ENCODE measurements at regions of chr3 and their contacts with region 1.

Region 1: GRCh38 chr3:33074217-33075067 is 22.5 kb downstream of the GLB1 start:
- DNase-seq: peak; percentile 84
- H3K4me3 Mint-ChIP-seq: no peak overlapping the region
- H3K27ac Mint-ChIP-seq: no peak overlapping the region
- H3K4me1 Mint-ChIP-seq: peaks cover 11% of the 10 kb centered on the region
- H3K27me3 Mint-ChIP-seq: no peaks in the 10 kb centered on the region

Region 2: GRCh38 chr3:32401556-32402081 is 672.8 kb before region 1 on chr3:
- CTCF ChIA-PET with region 1: no interaction called
- intact Hi-C with region 1: no loop called
- DNase-seq: peak; percentile 77
- H3K4me3 Mint-ChIP-seq: peak overlapping the region; percentile 92
- H3K27ac Mint-ChIP-seq: peak overlapping the region; percentile 99
- H3K4me1 Mint-ChIP-seq: peaks cover 74% of the 10 kb centered on the region
- H3K27me3 Mint-ChIP-seq: no peaks in the 10 kb centered on the region

Region 3: GRCh38 chr3:32733631-32734229 is 340.7 kb before region 1 on chr3:
- CTCF ChIA-PET with region 1: interaction called, 3 read pairs
- intact Hi-C with region 1: loop called (anchors 10 kb)
- DNase-seq: no peak
- H3K4me3 Mint-ChIP-seq: no peak overlapping the region
- H3K27ac Mint-ChIP-seq: no peak overlapping the region
- H3K4me1 Mint-ChIP-seq: no peaks in the 10 kb centered on the region
- H3K27me3 Mint-ChIP-seq: no peaks in the 10 kb centered on the region

Region 4: GRCh38 chr3:32897981-32898622 is 176.3 kb before region 1 on chr3:
- CTCF ChIA-PET with region 1: no interaction called
- intact Hi-C with region 1: no loop called
- DNase-seq: no peak
- H3K4me3 Mint-ChIP-seq: no peak overlapping the region
- H3K27ac Mint-ChIP-seq: no peak overlapping the region
- H3K4me1 Mint-ChIP-seq: peaks cover 2% of the 10 kb centered on the region
- H3K27me3 Mint-ChIP-seq: peaks cover 18% of the 10 kb centered on the region

Region 5: GRCh38 chr3:32973982-32974381 is 100.5 kb before region 1 on chr3:
- CTCF ChIA-PET with region 1: interaction called, 11 read pairs
- intact Hi-C with region 1: no loop called
- DNase-seq: peak; percentile 49
- H3K4me3 Mint-ChIP-seq: no peak overlapping the region
- H3K27ac Mint-ChIP-seq: no peak overlapping the region
- H3K4me1 Mint-ChIP-seq: peaks cover 10% of the 10 kb centered on the region
- H3K27me3 Mint-ChIP-seq: no peaks in the 10 kb centered on the region

Region 6: GRCh38 chr3:33030802-33031201 is 43.6 kb before region 1 on chr3:
- CTCF ChIA-PET with region 1: interaction called, 10 read pairs
- intact Hi-C with region 1: loop called (anchors 2 kb)
- DNase-seq: peak; percentile 56
- H3K4me3 Mint-ChIP-seq: no peak overlapping the region
- H3K27ac Mint-ChIP-seq: no peak overlapping the region
- H3K4me1 Mint-ChIP-seq: peaks cover 15% of the 10 kb centered on the region
- H3K27me3 Mint-ChIP-seq: no peaks in the 10 kb centered on the region

Region 7: GRCh38 chr3:33089515-33089914 is 15.1 kb after region 1 on chr3:
- CTCF ChIA-PET with region 1: interaction called, 21 read pairs
- intact Hi-C with region 1: no loop called
- DNase-seq: peak; percentile 28
- H3K4me3 Mint-ChIP-seq: no peak overlapping the region
- H3K27ac Mint-ChIP-seq: no peak overlapping the region
- H3K4me1 Mint-ChIP-seq: peaks cover 68% of the 10 kb centered on the region
- H3K27me3 Mint-ChIP-seq: no peaks in the 10 kb centered on the region

Region 8: GRCh38 chr3:33131331-33132018 is 57.0 kb after region 1 on chr3:
- CTCF ChIA-PET with region 1: interaction called, 10 read pairs
- intact Hi-C with region 1: no loop called
- DNase-seq: peak; percentile 50
- H3K4me3 Mint-ChIP-seq: no peak overlapping the region
- H3K27ac Mint-ChIP-seq: no peak overlapping the region
- H3K4me1 Mint-ChIP-seq: peaks cover 4% of the 10 kb centered on the region
- H3K27me3 Mint-ChIP-seq: no peaks in the 10 kb centered on the region